ENCODE measurements at regions of chr7 and their contacts with region 1.

Region 1: GRCh38 chr7:45917658-45918057 is 3.4 kb downstream of the IGFBP3 start:
- DNase-seq: peak; percentile 82
- ATAC-seq: peak; percentile 61
- H3K4me3 Mint-ChIP-seq: no peak overlapping the region
- H3K27ac Mint-ChIP-seq: no peak overlapping the region
- H3K4me1 Mint-ChIP-seq: peaks cover 18% of the 10 kb centered on the region
- H3K27me3 Mint-ChIP-seq: peaks cover 54% of the 10 kb centered on the region
- CTCF ChIP-seq: peak; percentile 91

Region 2: DNA sequence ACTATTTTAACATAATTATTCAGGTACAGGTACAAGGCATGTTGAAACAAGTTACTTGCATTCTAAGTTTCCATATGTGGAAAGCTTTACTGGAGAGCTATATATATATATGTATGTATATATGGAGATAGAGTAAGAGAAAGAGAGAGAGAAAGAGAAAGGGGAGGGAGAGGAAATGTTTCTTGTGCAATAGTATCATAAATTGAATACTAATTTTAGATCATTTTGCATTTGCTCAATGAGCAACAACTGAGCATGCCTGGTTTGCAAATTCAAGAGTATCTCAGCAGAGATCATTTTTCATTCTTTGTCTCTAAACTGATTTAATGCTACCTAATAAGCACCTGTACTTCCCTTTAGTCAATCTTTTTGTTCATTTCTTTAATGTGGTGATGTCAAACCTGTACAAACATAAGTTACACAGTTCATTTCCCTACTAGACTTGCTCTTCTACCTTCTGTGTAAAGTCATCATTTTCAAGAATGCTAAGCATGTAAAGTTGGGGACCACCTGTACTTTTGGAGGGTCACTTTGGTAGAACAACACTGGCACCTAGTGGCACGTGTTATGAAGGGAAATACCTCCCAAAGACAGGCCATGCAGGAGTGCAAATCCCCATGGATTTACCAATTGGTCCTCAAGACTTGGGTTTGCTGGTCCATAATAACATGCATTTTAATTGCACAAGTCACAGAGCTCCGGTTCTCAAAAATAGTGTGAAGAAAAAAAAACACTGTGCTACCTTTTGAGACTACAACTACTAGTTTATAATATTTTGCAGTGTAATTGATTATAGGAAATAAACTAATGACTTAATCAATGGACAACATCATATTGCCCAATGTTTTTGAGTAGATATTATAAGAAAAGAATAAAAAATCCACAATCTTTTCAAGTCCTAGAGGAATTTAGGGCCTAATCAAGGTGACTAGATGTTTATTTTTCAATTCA is 434.6 kb after region 1 on chr7:
- CTCF ChIA-PET with region 1: interaction called, 3 read pairs
- POLR2A ChIA-PET with region 1: no interaction called
- intact Hi-C with region 1: loop called (anchors 5 kb)
- DNase-seq: peak; percentile 36
- ATAC-seq: no peak
- H3K4me3 Mint-ChIP-seq: no peak overlapping the region
- H3K27ac Mint-ChIP-seq: no peak overlapping the region
- H3K4me1 Mint-ChIP-seq: no peaks in the 10 kb centered on the region
- H3K27me3 Mint-ChIP-seq: no peaks in the 10 kb centered on the region
- CTCF ChIP-seq: peak; percentile 34

Region 3: DNA sequence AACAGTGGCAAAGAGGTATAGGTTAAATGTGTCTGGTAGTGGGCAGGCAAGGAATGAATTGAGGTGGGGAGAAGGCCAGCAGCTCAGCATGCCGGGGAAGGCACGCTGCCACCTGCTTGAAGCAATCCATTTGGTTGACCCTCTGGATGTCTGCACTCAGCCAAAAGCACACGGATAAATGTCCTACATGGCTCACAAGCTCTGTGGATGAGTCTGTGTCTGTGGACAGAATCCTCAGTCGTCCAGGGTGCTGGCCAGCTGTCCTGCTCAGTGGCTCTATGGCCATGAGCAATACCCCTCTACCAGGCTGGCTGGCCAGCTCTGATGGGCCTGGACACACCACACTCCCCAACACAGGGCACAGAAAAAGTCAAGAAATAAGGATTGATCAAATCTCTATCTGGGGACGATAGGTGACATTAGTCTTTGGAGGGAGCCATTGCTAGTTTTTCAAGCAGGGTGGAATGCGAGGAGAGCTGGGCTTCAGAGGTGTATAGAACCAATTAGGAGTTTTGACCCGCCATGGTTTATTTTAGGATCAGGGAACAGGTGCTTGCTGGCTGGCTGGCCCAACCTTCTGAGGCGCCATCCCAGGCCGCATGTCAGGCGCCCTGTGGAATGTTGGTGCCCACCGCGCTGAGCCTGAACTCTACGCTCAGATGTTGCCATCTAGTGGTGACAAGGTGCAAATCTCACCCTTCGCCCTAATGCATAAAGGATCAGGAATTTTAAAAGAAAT is 1170.8 kb after region 1 on chr7:
- CTCF ChIA-PET with region 1: interaction called, 5 read pairs
- POLR2A ChIA-PET with region 1: no interaction called
- intact Hi-C with region 1: loop called (anchors 5 kb)
- DNase-seq: peak; percentile 31
- ATAC-seq: no peak
- H3K4me3 Mint-ChIP-seq: no peak overlapping the region
- H3K27ac Mint-ChIP-seq: no peak overlapping the region
- H3K4me1 Mint-ChIP-seq: no peaks in the 10 kb centered on the region
- H3K27me3 Mint-ChIP-seq: no peaks in the 10 kb centered on the region
- CTCF ChIP-seq: peak; percentile 82